Activated B cell treated with CpG ODN at 0.5 μM for 24 hours (primary cell): ENCODE measurements at regions of chr12 and their contacts with region 1.

Region 1: GRCh38 chr12:96399919-96400797 is at the start of gene CDK17:
- DNase-seq: peak; percentile 91
- ATAC-seq: peak; percentile 72
- H3K4me3 Mint-ChIP-seq: peak within 1 kb of the TSS; percentile 95
- H3K27ac Mint-ChIP-seq: peak within 1 kb of the TSS; percentile 95
- H3K4me1 Mint-ChIP-seq: peaks cover 61% of the 10 kb centered on the region
- H3K27me3 Mint-ChIP-seq: no peaks in the 10 kb centered on the region
- CTCF ChIP-seq: no peak
- total RNA-seq, gene CDK17: 52.1 and 57.3 TPM in 2 replicates

Region 2: DNA sequence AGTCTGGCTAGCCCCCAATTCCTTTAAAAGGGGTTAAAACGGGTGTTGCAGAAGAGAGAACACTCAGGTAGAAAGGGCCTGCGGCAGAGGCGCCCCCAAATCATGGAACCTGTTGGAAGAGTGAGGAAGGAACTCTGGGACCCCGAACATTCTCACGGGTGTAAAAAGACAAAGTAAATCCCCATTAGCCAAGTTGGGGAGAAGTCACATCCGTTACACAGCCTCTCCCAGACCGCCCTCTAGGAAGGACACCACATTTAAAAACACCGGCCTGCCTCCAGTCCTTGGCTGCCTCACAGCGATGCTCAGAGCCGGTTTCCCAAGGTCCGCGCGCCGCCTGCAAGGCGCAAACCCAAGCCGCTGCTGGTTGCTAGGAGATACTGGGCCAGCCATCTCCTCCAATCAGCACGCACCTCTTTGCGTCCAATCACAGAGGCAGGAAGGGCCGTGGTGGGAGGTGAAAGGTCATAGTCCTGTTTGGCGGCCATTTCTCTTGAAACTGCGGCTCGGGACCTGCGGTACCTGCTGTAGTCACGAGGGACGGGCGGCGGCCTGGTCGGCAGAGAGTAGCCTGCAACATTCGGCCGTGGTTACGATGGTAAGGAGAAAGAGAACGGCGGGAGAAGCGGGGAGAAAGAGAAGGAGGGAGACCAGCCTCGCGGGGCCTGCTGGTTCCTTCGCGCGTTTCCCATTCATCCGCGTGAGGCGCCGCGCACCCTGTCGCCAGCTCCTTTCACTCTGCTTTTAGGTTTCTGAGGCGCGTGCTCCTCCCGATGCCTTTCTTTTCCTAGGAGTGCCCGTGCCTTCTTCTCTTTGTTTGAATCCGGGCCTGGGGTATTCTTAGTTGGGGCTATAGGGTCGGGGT is 541.4 kb before region 1 on chr12 and contains the start of gene SNRPF:
- CTCF ChIA-PET with region 1: no interaction called
- POLR2A ChIA-PET with region 1: interaction called, 3 read pairs
- intact Hi-C with region 1: loop called (anchors 1 kb)
- DNase-seq: peak; percentile 85
- ATAC-seq: peak; percentile 97
- H3K4me3 Mint-ChIP-seq: no peak within 1 kb of the TSS
- H3K27ac Mint-ChIP-seq: peak within 1 kb of the TSS; percentile 4
- H3K4me1 Mint-ChIP-seq: peaks cover 12% of the 10 kb centered on the region
- H3K27me3 Mint-ChIP-seq: peaks cover 8% of the 10 kb centered on the region
- CTCF ChIP-seq: no peak
- total RNA-seq, gene SNRPF: 35.2 and 38.2 TPM in 2 replicates

Region 3: DNA sequence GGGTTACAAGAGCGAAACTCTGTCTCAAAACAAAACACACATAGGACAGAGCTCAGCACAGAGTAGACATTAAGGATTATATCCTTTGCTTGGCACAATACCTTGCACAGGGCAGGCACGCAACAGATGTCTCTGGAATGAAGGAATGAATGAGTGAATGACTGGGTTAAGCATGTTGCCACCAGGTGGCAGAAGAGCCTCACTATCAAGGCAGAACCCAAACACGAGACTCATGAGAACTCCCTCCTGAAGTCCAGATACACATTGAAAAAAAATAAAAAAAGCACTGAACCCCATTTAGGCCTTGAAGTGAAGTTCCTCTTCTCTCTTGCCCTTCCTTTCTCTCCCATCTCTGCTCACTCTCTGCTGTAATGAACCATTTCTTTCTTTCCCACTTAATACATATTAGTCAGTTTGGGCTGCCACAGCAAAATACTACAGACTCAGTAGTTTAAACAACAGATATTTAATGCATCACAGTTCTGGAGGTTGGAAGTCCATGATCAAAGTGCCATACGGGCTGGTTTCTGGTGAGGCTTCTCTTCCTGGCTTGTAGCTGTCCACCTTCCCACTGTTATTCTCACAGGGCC is 338.2 kb before region 1 on chr12:
- CTCF ChIA-PET with region 1: no interaction called
- POLR2A ChIA-PET with region 1: no interaction called
- intact Hi-C with region 1: loop called (anchors 1 kb)
- DNase-seq: peak; percentile 37
- ATAC-seq: peak; percentile 92
- H3K4me3 Mint-ChIP-seq: no peak overlapping the region
- H3K27ac Mint-ChIP-seq: peak overlapping the region; percentile 71
- H3K4me1 Mint-ChIP-seq: peaks cover 31% of the 10 kb centered on the region
- H3K27me3 Mint-ChIP-seq: no peaks in the 10 kb centered on the region
- CTCF ChIP-seq: no peak

Region 4: DNA sequence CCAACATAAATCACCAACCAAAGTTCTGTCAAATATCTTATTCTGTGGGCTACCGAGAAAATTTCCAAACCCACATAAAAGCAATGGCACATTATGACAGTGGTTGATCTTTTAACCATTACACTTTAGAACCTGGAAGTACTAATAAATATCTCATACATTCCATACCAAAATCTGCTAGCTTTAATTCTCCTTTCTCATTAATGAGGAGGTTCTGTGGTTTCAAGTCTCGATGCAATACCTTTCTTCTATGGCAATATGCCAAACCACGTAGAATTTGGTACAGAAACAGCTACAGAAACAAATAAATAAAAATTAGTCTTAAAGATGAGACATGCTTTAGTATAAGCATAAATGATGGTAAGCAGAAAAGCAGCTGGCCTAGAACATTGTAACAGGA is 105.3 kb before region 1 on chr12:
- CTCF ChIA-PET with region 1: interaction called, 3 read pairs
- POLR2A ChIA-PET with region 1: interaction called, 3 read pairs
- intact Hi-C with region 1: loop called (anchors 5 kb)
- DNase-seq: no peak
- ATAC-seq: no peak
- H3K4me3 Mint-ChIP-seq: no peak overlapping the region
- H3K27ac Mint-ChIP-seq: no peak overlapping the region
- H3K4me1 Mint-ChIP-seq: peaks cover 2% of the 10 kb centered on the region
- H3K27me3 Mint-ChIP-seq: no peaks in the 10 kb centered on the region
- CTCF ChIP-seq: no peak

Region 5: DNA sequence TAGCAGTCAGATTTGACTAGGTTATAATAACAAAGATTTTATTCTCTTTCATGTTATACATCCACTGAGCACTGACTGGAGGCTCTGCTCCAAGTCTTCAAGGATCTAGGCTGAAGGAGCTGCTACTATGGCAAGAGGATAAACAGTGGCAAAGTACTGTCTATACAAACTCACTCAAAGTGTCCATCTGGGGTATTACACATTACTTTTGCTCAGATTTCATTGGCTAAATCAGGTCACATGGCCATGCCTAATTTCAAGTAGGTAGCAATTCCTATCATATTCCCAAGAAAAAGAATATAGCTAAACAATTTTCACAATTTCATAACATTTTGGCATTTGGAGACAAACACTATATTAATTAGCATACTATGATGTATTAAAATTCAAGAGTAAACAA is 40.8 kb before region 1 on chr12:
- CTCF ChIA-PET with region 1: no interaction called
- POLR2A ChIA-PET with region 1: no interaction called
- intact Hi-C with region 1: no loop called
- DNase-seq: no peak
- ATAC-seq: no peak
- H3K4me3 Mint-ChIP-seq: no peak overlapping the region
- H3K27ac Mint-ChIP-seq: no peak overlapping the region
- H3K4me1 Mint-ChIP-seq: peaks cover 60% of the 10 kb centered on the region
- H3K27me3 Mint-ChIP-seq: no peaks in the 10 kb centered on the region
- CTCF ChIP-seq: no peak

Region 6: GRCh38 chr12:96427269-96427729 is 27.1 kb after region 1 on chr12:
- CTCF ChIA-PET with region 1: no interaction called
- POLR2A ChIA-PET with region 1: no interaction called
- intact Hi-C with region 1: no loop called
- DNase-seq: no peak
- ATAC-seq: no peak
- H3K4me3 Mint-ChIP-seq: no peak overlapping the region
- H3K27ac Mint-ChIP-seq: no peak overlapping the region
- H3K4me1 Mint-ChIP-seq: peaks cover 4% of the 10 kb centered on the region
- H3K27me3 Mint-ChIP-seq: no peaks in the 10 kb centered on the region
- CTCF ChIP-seq: no peak

Region 7: GRCh38 chr12:96445691-96446583 is 45.8 kb after region 1 on chr12:
- CTCF ChIA-PET with region 1: interaction called, 19 read pairs
- POLR2A ChIA-PET with region 1: interaction called, 9 read pairs
- intact Hi-C with region 1: loop called (anchors 1 kb)
- DNase-seq: no peak
- ATAC-seq: peak; percentile 98
- H3K4me3 Mint-ChIP-seq: peak overlapping the region; percentile 5
- H3K27ac Mint-ChIP-seq: peak overlapping the region; percentile 79
- H3K4me1 Mint-ChIP-seq: peaks cover 16% of the 10 kb centered on the region
- H3K27me3 Mint-ChIP-seq: no peaks in the 10 kb centered on the region
- CTCF ChIP-seq: no peak

Region 8: GRCh38 chr12:96473394-96474093 is 73.4 kb after region 1 on chr12:
- CTCF ChIA-PET with region 1: no interaction called
- POLR2A ChIA-PET with region 1: no interaction called
- intact Hi-C with region 1: no loop called
- DNase-seq: no peak
- ATAC-seq: no peak
- H3K4me3 Mint-ChIP-seq: no peak overlapping the region
- H3K27ac Mint-ChIP-seq: no peak overlapping the region
- H3K4me1 Mint-ChIP-seq: no peaks in the 10 kb centered on the region
- H3K27me3 Mint-ChIP-seq: peaks cover 2% of the 10 kb centered on the region
- CTCF ChIP-seq: no peak

Region 9: DNA sequence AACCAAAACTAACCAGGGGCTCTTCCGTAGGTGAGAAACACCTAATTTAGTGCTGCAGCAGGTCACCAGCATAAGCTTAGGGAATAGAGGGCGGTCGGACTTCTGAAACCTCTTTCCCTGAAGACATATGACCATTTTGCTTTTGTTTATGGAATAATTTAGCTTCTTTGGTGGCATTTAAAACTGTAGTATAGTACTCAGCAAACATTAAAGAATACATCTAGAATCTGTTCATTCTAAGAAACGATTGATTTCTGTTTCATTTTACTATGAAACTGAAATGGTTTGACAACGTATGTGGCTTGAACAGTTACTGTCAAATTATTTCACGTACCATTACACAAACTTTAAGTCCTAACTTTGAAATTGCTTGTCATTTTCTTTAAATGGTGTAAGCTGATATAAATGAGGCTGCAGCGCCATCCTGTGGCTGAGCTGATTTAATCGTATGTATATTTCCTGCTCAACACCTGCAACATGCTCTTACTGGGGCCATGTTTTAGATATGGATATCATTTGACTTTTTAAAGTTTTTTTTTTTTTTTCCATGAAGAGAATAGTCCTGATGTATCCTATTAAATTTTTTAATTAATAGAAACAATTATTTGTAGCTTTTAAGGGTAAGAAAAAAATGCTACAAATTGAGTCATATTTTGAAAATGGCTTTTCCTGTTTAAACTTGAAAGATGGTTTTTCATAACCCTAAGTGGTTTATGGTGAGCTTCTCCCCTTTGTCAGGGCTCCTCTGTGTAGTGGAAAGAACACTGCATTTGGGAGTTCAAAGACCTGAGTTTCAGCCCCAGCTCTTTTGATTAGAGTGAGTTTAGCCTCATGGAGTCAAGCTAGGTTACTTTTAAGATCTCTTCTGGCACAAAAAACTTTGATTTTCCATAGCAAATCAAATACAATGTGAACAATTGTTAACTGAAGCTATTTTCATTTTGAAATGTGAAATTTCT is 116.6 kb after region 1 on chr12:
- CTCF ChIA-PET with region 1: interaction called, 38 read pairs
- POLR2A ChIA-PET with region 1: interaction called, 18 read pairs
- intact Hi-C with region 1: loop called (anchors 1 kb)
- DNase-seq: peak; percentile 59
- ATAC-seq: peak; percentile 54
- H3K4me3 Mint-ChIP-seq: no peak overlapping the region
- H3K27ac Mint-ChIP-seq: no peak overlapping the region
- H3K4me1 Mint-ChIP-seq: peaks cover 21% of the 10 kb centered on the region
- H3K27me3 Mint-ChIP-seq: no peaks in the 10 kb centered on the region
- CTCF ChIP-seq: no peak